Breast epithelium (tissue), 4 donors: ENCODE measurements at regions of chr7 and their contacts with region 1.

Region 1: DNA sequence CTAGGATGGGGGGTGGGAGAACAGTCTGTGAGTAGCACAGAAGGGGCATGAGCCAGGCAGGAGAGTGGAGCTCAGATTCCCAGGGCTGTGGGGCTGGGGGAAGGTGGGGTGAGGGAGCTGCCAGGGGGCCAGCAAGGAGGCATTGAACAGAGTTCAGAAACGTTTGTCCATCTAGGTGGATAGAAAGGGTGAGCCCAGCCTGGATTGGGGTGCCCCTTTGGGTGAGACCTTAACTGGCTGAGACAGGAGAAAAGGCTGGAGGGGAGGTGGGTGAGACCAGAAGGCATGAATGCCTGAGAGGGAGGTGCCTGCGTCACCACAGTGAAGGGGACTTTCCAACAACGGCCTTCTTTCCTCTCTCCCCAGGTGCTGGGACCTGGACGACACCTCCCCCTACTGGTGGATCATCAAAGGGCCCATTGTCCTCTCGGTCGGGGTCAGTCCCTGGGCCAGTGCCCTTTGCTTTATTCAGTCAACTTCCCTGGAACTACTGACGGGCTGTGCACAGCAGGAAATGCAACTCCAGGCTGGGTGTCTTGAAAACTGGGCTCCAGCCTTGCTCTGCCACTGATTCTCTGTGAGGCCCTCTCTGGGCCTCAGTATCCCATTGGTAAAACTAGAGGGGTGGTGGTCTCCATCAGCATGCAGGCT is 11.0 kb downstream of the GHRHR start:
- DNase-seq: no peak
- H3K4me3 ChIP-seq: no peak overlapping the region
- H3K27ac ChIP-seq: no peak overlapping the region
- H3K4me1 ChIP-seq: no peaks in the 10 kb centered on the region
- H3K27me3 ChIP-seq: no peaks in the 10 kb centered on the region
- CTCF ChIP-seq: peak; percentile 39 to 50 (median 47)
- POLR2A ChIP-seq: no peak

Region 2: GRCh38 chr7:29146057-29146706 is 1828.5 kb before region 1 on chr7 and contains the start of gene CPVL:
- intact Hi-C with region 1: loop called (anchors 10 kb)
- DNase-seq: peak in 1 of 2 donors; percentile 22
- H3K4me3 ChIP-seq: peak within 1 kb of the TSS; percentile 47 to 73 (median 56)
- H3K27ac ChIP-seq: peak within 1 kb of the TSS in 1 of 2 donors; percentile 40
- H3K4me1 ChIP-seq: no peaks in the 10 kb centered on the region
- H3K27me3 ChIP-seq: peaks cover 0 to 6% of the 10 kb centered on the region in 2 donors
- CTCF ChIP-seq: no peak
- POLR2A ChIP-seq: no peak
- total RNA-seq, gene CPVL: 11.4 to 44.2 (median 13.4) TPM

Region 3: GRCh38 chr7:30800785-30801252 is 173.9 kb before region 1 on chr7:
- intact Hi-C with region 1: loop called (anchors 10 kb)
- DNase-seq: peak in 1 of 2 donors; percentile 60
- H3K4me3 ChIP-seq: no peak overlapping the region
- H3K27ac ChIP-seq: peak overlapping the region; percentile 15 to 70
- H3K4me1 ChIP-seq: peaks cover 7 to 8% of the 10 kb centered on the region in 2 donors
- H3K27me3 ChIP-seq: no peaks in the 10 kb centered on the region
- CTCF ChIP-seq: peak; percentile 21 to 76 (median 71)
- POLR2A ChIP-seq: no peak